ENCODE measurements at regions of chr11 and their contacts with region 1.

Region 1: GRCh38 chr11:95067039-95067840 is 521 bp downstream of the SRSF8 start:
- DNase-seq: peak; percentile 66 to 83
- ATAC-seq: peak; percentile 67
- H3K4me3 ChIP-seq: peak overlapping the region; percentile 51 to 93 (median 76)
- H3K27ac ChIP-seq: peak overlapping the region; percentile 89 to 98 (median 94)
- H3K4me1 ChIP-seq: peaks cover 19 to 27% of the 10 kb centered on the region in 2 donors
- H3K27me3 ChIP-seq: no peaks in the 10 kb centered on the region
- CTCF ChIP-seq: peak; percentile 39 to 79 (median 62)
- POLR2A ChIP-seq: peak; percentile 43 to 65

Region 2: GRCh38 chr11:93741094-93741881 is 1326.0 kb before region 1 on chr11 and contains the starts of genes C11orf54 and TAF1D:
- in situ Hi-C with region 1: no loop called
- intact Hi-C with region 1: loop called (anchors 5 kb)
- DNase-seq: peak; percentile 98
- ATAC-seq: peak; percentile 87 to 89
- H3K4me3 ChIP-seq: peak within 1 kb of the TSS; percentile 71 to 92 (median 76)
- H3K27ac ChIP-seq: peak within 1 kb of the TSS; percentile 91 to 99 (median 94)
- H3K4me1 ChIP-seq: peaks cover 48 to 52% of the 10 kb centered on the region in 2 donors
- H3K27me3 ChIP-seq: no peaks in the 10 kb centered on the region
- CTCF ChIP-seq: peak in 3 of 5 experiments; percentile 6 to 17 (median 9)
- POLR2A ChIP-seq: peak; percentile 93 to 95
- total RNA-seq, gene C11orf54: 33.3 to 71.0 (median 42.0) TPM
- total RNA-seq, gene TAF1D: 42.6 to 85.5 (median 55.0) TPM

Region 3: DNA sequence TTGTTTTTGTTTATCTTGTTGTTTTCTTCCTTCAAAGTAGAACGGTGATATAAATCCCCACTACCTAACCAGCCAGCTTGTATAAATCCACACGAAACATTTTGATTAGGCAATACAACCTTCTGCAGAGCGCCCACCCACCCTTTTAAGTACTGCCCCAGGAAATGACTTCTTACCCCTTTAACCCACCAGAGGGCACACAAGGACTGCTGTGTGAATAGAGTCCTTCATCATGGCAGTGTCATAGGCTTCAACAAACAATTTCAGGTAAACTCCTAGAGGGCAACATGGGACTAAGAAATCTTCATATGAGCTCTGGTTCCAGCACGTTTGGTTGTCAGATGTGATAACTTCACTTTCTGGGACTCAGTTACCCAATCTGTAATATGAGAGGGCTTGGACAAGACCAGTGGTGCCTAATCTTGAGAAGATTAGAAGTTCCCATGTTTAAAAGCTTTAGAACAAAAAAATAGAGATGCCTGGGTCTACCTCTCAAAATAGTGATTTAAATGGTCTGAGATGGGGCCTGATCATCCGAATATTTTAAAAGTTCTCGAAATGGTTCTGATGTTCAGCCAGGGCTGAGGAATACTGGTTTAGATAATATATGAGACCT is 444.0 kb before region 1 on chr11:
- in situ Hi-C with region 1: no loop called
- intact Hi-C with region 1: loop called (anchors 5 kb)
- DNase-seq: peak; percentile 36 to 44
- ATAC-seq: peak; percentile 98
- H3K4me3 ChIP-seq: no peak overlapping the region
- H3K27ac ChIP-seq: no peak overlapping the region
- H3K4me1 ChIP-seq: peaks cover 0 to 4% of the 10 kb centered on the region in 2 donors
- H3K27me3 ChIP-seq: no peaks in the 10 kb centered on the region
- CTCF ChIP-seq: peak; percentile 86 to 94 (median 89)
- POLR2A ChIP-seq: no peak

Region 4: DNA sequence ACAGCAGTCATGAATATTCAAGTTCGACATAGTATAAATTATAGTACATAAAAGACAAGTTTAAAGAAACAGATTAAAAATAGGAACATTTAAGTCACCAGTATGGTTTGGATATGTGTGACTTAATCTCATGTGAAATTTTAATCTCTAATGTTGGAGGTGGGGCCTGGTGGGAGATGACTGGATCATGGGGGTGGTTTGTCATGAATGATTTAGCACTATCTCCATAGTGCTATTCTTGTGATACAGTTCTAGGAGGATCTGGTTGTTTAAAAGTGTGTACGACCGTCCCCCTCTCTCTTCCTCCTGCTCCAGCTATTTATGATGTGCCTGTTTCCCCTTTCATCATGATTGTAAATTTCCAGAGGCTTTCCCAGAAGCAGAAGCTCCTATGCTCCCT is 38.9 kb before region 1 on chr11:
- in situ Hi-C with region 1: no loop called
- intact Hi-C with region 1: no loop called
- DNase-seq: no peak
- ATAC-seq: no peak
- H3K4me3 ChIP-seq: no peak overlapping the region
- H3K27ac ChIP-seq: no peak overlapping the region
- H3K4me1 ChIP-seq: no peaks in the 10 kb centered on the region
- H3K27me3 ChIP-seq: no peaks in the 10 kb centered on the region
- CTCF ChIP-seq: no peak
- POLR2A ChIP-seq: no peak

Region 5: GRCh38 chr11:95089620-95090542 is 22.6 kb after region 1 on chr11 and contains the start of gene ENDOD1:
- in situ Hi-C with region 1: no loop called
- intact Hi-C with region 1: loop called (anchors 1 kb)
- DNase-seq: peak; percentile 59 to 72
- ATAC-seq: peak; percentile 86 to 87
- H3K4me3 ChIP-seq: peak within 1 kb of the TSS; percentile 69 to 97 (median 74)
- H3K27ac ChIP-seq: peak within 1 kb of the TSS; percentile 84 to 97 (median 89)
- H3K4me1 ChIP-seq: peaks cover 38 to 42% of the 10 kb centered on the region in 2 donors
- H3K27me3 ChIP-seq: no peaks in the 10 kb centered on the region
- CTCF ChIP-seq: peak in 4 of 5 experiments; percentile 11 to 26 (median 16)
- POLR2A ChIP-seq: peak; percentile 84 to 88
- total RNA-seq, gene ENDOD1: 17.5 to 35.2 (median 27.6) TPM

Region 6: GRCh38 chr11:95138448-95138847 is 71.2 kb after region 1 on chr11:
- in situ Hi-C with region 1: loop called in 2 of 4 experiments (anchors 5 kb)
- intact Hi-C with region 1: loop called (anchors 1 kb)
- DNase-seq: no peak
- ATAC-seq: peak; percentile 77 to 92
- H3K4me3 ChIP-seq: no peak overlapping the region
- H3K27ac ChIP-seq: no peak overlapping the region
- H3K4me1 ChIP-seq: peaks cover 7% of the 10 kb centered on the region in 2 donors
- H3K27me3 ChIP-seq: no peaks in the 10 kb centered on the region
- CTCF ChIP-seq: peak; percentile 17 to 49 (median 20)
- POLR2A ChIP-seq: no peak

Region 7: GRCh38 chr11:95231127-95231880 is 164.1 kb after region 1 on chr11 and contains the start of gene SESN3:
- in situ Hi-C with region 1: loop called in 1 of 4 experiments (anchors 25 kb)
- intact Hi-C with region 1: loop called (anchors 2 kb)
- DNase-seq: peak; percentile 98
- ATAC-seq: peak; percentile 99
- H3K4me3 ChIP-seq: peak within 1 kb of the TSS; percentile 73 to 83 (median 76)
- H3K27ac ChIP-seq: peak within 1 kb of the TSS; percentile 68 to 79 (median 70)
- H3K4me1 ChIP-seq: peaks cover 22 to 25% of the 10 kb centered on the region in 2 donors
- H3K27me3 ChIP-seq: no peaks in the 10 kb centered on the region
- CTCF ChIP-seq: peak in 1 of 5 experiments; percentile 9
- POLR2A ChIP-seq: peak; percentile 37 to 77
- total RNA-seq, gene SESN3: 6.0 to 10.8 (median 7.8) TPM

Region 8: GRCh38 chr11:95764267-95764898 is 697.1 kb after region 1 on chr11:
- in situ Hi-C with region 1: loop called in 3 of 4 experiments (anchors 10 kb)
- intact Hi-C with region 1: loop called (anchors 5 kb)
- DNase-seq: no peak
- ATAC-seq: peak in 1 of 2 donors; percentile 58
- H3K4me3 ChIP-seq: no peak overlapping the region
- H3K27ac ChIP-seq: no peak overlapping the region
- H3K4me1 ChIP-seq: no peaks in the 10 kb centered on the region
- H3K27me3 ChIP-seq: no peaks in the 10 kb centered on the region
- CTCF ChIP-seq: peak; percentile 42 to 72 (median 63)
- POLR2A ChIP-seq: no peak